ENCODE measurements at regions of chr3 and their contacts with region 1.

Region 1: GRCh38 chr3:41881233-41881821 is 80.6 kb downstream of the ULK4 start:
- DNase-seq: no peak

Region 2: DNA sequence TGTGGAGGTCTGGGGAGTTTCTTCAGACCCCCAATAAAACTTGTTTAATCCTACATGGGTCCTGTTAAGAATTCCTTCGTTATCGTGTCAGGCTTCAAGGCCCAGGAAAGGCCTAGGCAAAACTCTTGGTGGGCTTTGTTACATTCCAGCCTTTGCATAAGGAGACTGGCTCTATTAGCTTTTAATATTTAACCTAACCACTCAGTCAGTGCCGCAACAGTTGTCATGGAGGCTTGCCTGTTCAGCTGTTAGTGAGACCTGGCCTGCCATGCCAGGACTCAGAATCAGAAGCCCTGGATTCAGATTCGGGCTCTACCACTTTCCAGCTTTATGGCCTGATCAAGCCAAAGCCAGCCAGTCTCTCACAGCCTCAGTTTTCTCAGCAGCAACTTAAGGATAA is 1552.3 kb before region 1 on chr3:
- intact Hi-C with region 1: loop called in 1 of 2 experiments (anchors 5 kb)
- DNase-seq: no peak

Region 3: DNA sequence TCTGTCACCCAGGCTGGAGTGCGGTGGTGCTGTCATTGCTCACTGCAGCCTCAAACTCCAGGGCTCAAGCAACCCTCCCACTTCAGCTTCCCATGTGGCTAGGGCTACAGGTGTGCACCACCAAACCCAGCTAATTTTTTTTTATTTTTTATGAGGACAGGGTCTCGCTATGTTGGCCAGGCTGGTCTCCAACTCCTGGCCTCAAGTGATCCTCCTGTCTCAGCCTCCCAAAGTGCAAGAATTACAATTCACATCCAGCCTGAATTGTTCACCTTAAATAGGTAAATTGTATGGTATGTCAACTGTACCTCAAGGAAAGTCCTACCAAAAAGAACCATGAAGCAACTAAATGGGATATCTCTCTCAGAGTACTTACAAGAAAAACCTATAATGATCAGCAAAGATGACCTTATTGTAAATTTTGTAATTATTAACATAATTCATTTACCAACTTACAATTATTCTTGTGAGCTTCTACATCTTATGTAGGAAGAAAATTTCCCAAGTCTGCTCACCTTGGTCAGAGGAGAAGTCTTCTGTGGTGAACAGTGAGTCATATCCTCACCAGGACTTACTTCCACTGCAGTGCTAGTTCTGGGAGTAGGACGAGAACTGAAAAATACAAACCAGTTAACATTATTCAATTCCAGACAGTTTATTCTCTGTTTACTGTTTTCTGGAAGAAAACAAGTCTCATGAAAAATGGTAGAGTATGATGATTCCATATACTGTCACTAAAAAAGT is 26.2 kb after region 1 on chr3:
- intact Hi-C with region 1: no loop called
- DNase-seq: no peak